ENCODE measurements at regions of chr7 and their contacts with region 1.

Region 1: DNA sequence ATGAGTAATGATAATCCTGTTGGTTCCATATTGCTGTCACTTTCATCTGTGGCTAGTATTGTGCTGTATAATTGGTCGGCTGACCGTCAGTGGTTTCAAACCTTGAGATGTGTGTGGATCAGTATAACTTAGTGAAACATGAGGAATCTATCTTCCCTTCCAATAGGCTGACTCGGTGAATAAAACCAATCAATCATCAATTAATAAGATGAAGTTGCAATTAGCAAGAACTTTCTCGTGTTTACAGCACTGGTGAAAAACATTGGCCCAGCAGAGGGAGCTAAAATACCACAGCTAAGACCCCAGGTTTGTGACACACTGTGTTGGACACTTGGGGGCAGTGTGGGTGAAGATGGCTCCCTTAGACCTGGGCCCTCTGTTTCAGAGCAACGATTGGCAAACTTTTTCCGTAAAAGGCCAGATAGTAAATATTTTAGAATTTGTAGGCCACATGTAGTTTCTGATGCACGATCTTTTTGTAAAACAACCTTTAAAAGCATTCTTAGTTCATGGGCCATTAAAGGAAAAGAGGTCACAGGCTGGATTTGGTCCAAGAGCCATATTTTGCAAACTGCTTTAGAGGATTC is 47.8 kb downstream of the STRA8 start:
- DNase-seq: peak; percentile 94
- H3K4me3 ChIP-seq: no peak overlapping the region
- H3K27ac ChIP-seq: no peak overlapping the region
- H3K4me1 ChIP-seq: peaks cover 3 to 10% (median 8%) of the 10 kb centered on the region in 4 donors
- H3K27me3 ChIP-seq: no peaks in the 10 kb centered on the region
- CTCF ChIP-seq: peak; percentile 90 to 99 (median 92)
- EP300 ChIP-seq: no peak
- POLR2A ChIP-seq: no peak

Region 2: GRCh38 chr7:134873253-134873652 is 408.2 kb before region 1 on chr7:
- intact Hi-C with region 1: no loop called
- DNase-seq: no peak
- H3K4me3 ChIP-seq: no peak overlapping the region
- H3K27ac ChIP-seq: peak overlapping the region; percentile 74 to 87 (median 79)
- H3K4me1 ChIP-seq: peaks cover 23 to 99% (median 97%) of the 10 kb centered on the region in 4 donors
- H3K27me3 ChIP-seq: no peaks in the 10 kb centered on the region
- CTCF ChIP-seq: no peak
- EP300 ChIP-seq: no peak
- POLR2A ChIP-seq: no peak

Region 3: GRCh38 chr7:135335628-135336139 is 54.2 kb after region 1 on chr7:
- intact Hi-C with region 1: loop called (anchors 5 kb)
- DNase-seq: no peak
- H3K4me3 ChIP-seq: no peak overlapping the region
- H3K27ac ChIP-seq: no peak overlapping the region
- H3K4me1 ChIP-seq: peaks cover 0 to 14% (median 9%) of the 10 kb centered on the region in 4 donors
- H3K27me3 ChIP-seq: no peaks in the 10 kb centered on the region
- CTCF ChIP-seq: peak; percentile 30 to 35 (median 31)
- EP300 ChIP-seq: no peak
- POLR2A ChIP-seq: no peak

Region 4: GRCh38 chr7:135509903-135510602 is 228.6 kb after region 1 on chr7 and contains the start of gene CNOT4:
- intact Hi-C with region 1: loop called (anchors 2 kb)
- DNase-seq: peak; percentile 97
- H3K4me3 ChIP-seq: peak within 1 kb of the TSS; percentile 66 to 90 (median 80)
- H3K27ac ChIP-seq: peak within 1 kb of the TSS; percentile 90 to 94 (median 91)
- H3K4me1 ChIP-seq: peaks cover 17 to 45% (median 37%) of the 10 kb centered on the region in 4 donors
- H3K27me3 ChIP-seq: no peaks in the 10 kb centered on the region
- CTCF ChIP-seq: peak in 1 of 3 experiments; percentile 8
- EP300 ChIP-seq: no peak
- POLR2A ChIP-seq: no peak
- total RNA-seq, gene CNOT4: 18.6 to 28.7 (median 26.4) TPM

Region 5: GRCh38 chr7:135558337-135558767 is 276.9 kb after region 1 on chr7:
- intact Hi-C with region 1: loop called (anchors 2 kb)
- DNase-seq: no peak
- H3K4me3 ChIP-seq: peak overlapping the region; percentile 64 to 86 (median 72)
- H3K27ac ChIP-seq: peak overlapping the region; percentile 88 to 90 (median 88)
- H3K4me1 ChIP-seq: peaks cover 9 to 24% (median 21%) of the 10 kb centered on the region in 4 donors
- H3K27me3 ChIP-seq: no peaks in the 10 kb centered on the region
- CTCF ChIP-seq: peak; percentile 47 to 51 (median 47)
- EP300 ChIP-seq: no peak
- POLR2A ChIP-seq: no peak

Region 6: DNA sequence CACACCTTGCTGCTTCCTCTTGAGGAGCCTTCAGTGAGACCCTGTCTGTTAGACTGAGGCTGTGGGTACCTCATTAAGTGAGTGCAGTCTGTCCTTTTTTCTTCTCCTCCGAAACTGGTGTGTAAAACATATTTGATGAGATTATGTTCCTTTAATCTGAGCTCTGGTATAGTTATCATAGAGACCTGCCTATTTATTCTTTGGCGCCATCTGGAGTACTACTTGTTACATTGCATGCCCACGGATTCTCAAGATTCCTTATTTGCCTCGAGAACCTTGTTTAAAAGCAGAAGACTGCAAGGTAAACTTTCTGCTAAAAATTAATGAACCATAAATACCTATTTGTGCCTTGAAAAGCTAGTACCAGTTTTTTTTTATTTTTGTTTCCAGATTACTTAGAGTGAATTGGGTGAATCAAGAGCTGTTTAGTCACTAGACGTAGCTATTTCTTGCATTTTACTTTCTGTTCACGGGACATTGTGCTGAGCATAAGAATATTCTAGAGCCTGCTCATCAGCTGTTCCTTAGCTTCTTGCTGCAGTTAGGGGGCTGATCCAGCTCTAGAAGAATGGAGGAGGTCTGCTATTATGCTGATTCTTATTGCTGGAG is 363.9 kb after region 1 on chr7:
- intact Hi-C with region 1: loop called (anchors 2 kb)
- DNase-seq: no peak
- H3K4me3 ChIP-seq: no peak overlapping the region
- H3K27ac ChIP-seq: no peak overlapping the region
- H3K4me1 ChIP-seq: peaks cover 0 to 5% (median 4%) of the 10 kb centered on the region in 4 donors
- H3K27me3 ChIP-seq: no peaks in the 10 kb centered on the region
- CTCF ChIP-seq: peak; percentile 62 to 83 (median 70)
- EP300 ChIP-seq: no peak
- POLR2A ChIP-seq: no peak

Measured in esophagus muscularis mucosa (tissue), 4 donors.